Endothelial cell of umbilical vein (primary cell): ENCODE measurements at regions of chr12 and their contacts with region 1.

Region 1: DNA sequence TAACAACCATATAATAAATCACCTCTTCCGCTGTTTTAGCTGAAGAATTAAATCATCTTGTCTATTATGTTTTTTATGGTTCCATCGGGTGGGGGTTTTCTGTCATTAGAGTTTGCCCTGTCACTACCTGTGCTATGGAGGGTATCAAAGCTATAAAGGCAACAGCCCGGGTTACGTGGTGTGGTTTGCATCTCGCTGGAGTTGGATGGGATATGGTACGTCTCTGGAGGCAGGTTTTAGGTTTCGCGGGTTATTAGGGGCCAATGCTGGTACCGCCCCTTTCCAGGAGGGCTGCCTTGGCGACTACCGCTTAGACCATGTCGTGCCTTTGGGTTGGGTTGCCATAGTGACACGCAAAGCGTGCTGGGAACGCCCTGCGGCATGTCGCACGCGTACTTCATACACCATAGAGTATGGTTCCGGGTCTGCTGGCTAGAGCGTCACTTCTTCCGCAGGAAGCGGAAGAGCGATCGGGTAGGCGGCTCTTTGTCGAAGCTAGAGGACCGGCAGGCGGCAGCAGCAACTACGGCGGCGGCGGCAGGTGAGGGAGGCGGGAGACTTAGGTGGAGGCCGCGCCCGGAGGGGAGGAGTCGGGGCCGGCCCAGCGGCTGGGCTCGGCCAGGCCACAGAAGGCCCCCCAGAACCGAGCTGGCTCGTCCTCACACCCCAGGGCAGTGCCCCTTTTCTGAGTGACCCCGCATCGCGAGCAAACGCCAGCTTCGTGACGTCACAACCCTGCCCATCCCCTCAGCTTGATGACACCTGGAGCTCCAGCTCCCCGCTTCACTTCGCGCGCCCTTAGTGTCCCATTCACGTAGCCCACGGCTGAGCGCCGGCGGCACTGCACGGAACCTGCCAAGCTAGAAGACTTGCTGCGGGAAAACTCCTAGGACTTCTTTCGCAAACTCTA is at the start of gene ZC3H10:
- DNase-seq: peak; percentile 99
- H3K4me3 ChIP-seq: peak within 1 kb of the TSS; percentile 70 to 98 (median 72)
- H3K27ac ChIP-seq: peak within 1 kb of the TSS; percentile 86
- H3K4me1 ChIP-seq: peaks cover 24% of the 10 kb centered on the region
- H3K27me3 ChIP-seq: no peaks in the 10 kb centered on the region
- CTCF ChIP-seq: peak; percentile 42 to 62
- POLR2A ChIP-seq: peak; percentile 100
- total RNA-seq, gene ZC3H10: 8.7 and 10.1 TPM in 2 replicates

Region 2: DNA sequence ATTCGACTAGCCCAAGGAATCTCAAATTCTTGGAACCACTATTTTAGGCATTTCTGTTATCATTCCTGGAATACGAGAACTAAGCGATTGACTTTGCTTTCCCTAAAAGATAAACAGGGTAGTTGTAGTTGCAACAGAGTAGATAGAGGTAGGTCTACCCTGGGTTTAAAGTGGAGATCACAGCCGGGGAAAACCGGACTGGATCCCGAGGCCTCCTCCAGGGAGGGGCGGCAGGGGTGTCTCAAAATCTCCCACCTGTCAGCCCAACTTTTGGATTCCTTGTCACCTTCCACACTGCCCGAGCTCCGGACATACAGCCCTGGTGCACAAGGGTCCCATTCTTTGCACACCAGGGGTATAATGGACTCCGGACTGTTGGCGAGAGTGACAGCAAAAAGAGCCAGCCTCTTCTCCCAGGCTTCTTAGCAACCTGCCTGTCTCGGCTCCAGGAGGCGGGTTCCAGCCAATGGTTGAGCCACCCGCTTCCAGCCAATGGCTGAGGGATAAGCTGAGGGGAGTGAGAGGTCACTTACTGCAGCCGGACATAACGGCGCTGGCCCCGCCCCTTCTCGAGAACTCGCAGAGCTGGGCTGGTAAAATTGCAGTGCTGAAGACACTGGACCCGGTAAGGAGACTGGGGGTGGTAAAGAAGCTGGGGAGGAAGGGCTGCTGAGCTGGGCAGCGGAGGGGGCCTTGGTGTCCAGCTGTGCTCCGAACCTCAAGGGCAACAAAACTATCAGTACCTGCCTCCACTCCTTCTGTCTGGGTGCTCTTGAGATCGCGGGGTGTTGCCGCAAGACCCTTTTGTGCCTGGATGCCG is 121.1 kb before region 1 on chr12 and contains the start of gene SUOX:
- CTCF ChIA-PET with region 1: no interaction called
- POLR2A ChIA-PET with region 1: no interaction called
- dilution Hi-C with region 1: no loop called
- intact Hi-C with region 1: loop called (anchors 1 kb)
- DNase-seq: peak; percentile 98
- H3K4me3 ChIP-seq: peak within 1 kb of the TSS; percentile 17 to 73 (median 40)
- H3K27ac ChIP-seq: no peak within 1 kb of the TSS
- H3K4me1 ChIP-seq: peaks cover 10% of the 10 kb centered on the region
- H3K27me3 ChIP-seq: no peaks in the 10 kb centered on the region
- CTCF ChIP-seq: no peak
- POLR2A ChIP-seq: peak; percentile 85
- total RNA-seq, gene SUOX: 24.3 and 24.8 TPM in 2 replicates

Region 3: GRCh38 chr12:56007564-56008559 is 110.2 kb before region 1 on chr12:
- CTCF ChIA-PET with region 1: no interaction called
- POLR2A ChIA-PET with region 1: no interaction called
- dilution Hi-C with region 1: no loop called
- intact Hi-C with region 1: no loop called
- DNase-seq: peak; percentile 37
- H3K4me3 ChIP-seq: peak overlapping the region; percentile 53 to 74 (median 53)
- H3K27ac ChIP-seq: no peak overlapping the region
- H3K4me1 ChIP-seq: peaks cover 5% of the 10 kb centered on the region
- H3K27me3 ChIP-seq: no peaks in the 10 kb centered on the region
- CTCF ChIP-seq: no peak
- POLR2A ChIP-seq: no peak

Region 4: GRCh38 chr12:56084958-56085543 is 33.0 kb before region 1 on chr12:
- CTCF ChIA-PET with region 1: interaction called, 14 read pairs
- POLR2A ChIA-PET with region 1: no interaction called
- dilution Hi-C with region 1: no loop called
- intact Hi-C with region 1: no loop called
- DNase-seq: peak; percentile 20
- H3K4me3 ChIP-seq: no peak overlapping the region
- H3K27ac ChIP-seq: no peak overlapping the region
- H3K4me1 ChIP-seq: peaks cover 16% of the 10 kb centered on the region
- H3K27me3 ChIP-seq: peaks cover 4 to 8% of the 10 kb centered on the region in 2 experiments
- CTCF ChIP-seq: peak; percentile 40 to 58
- POLR2A ChIP-seq: no peak

Region 5: GRCh38 chr12:56127888-56128669 is 10.0 kb after region 1 on chr12 and contains the start of gene ESYT1:
- CTCF ChIA-PET with region 1: interaction called, 31 read pairs
- POLR2A ChIA-PET with region 1: interaction called, 20 read pairs
- dilution Hi-C with region 1: no loop called
- intact Hi-C with region 1: loop called (anchors 1 kb)
- DNase-seq: peak; percentile 100
- H3K4me3 ChIP-seq: peak within 1 kb of the TSS; percentile 63 to 75 (median 68)
- H3K27ac ChIP-seq: peak within 1 kb of the TSS; percentile 46
- H3K4me1 ChIP-seq: peaks cover 28% of the 10 kb centered on the region
- H3K27me3 ChIP-seq: no peaks in the 10 kb centered on the region
- CTCF ChIP-seq: no peak
- POLR2A ChIP-seq: peak; percentile 82
- total RNA-seq, gene ESYT1: 133 and 161 TPM in 2 replicates

Region 6: DNA sequence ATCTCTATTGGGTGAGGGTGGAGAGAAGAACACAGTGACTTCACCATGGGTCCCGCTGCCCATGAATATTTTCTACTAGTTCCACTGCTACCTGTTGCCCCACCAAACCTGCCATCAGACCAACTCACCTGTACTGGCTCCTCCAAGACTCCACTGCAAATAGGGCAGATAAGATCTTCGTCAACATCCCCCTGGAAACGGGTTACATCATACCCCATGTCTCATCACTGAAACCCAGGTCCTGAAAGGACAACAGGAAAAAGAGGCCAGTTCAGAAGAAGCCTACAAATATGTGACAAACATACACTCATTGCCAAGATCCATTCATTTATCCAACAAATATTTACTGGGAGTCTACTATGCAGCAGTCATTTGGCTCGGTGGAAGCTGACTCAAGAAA is 95.8 kb after region 1 on chr12:
- CTCF ChIA-PET with region 1: no interaction called
- POLR2A ChIA-PET with region 1: no interaction called
- dilution Hi-C with region 1: no loop called
- intact Hi-C with region 1: no loop called
- DNase-seq: no peak
- H3K4me3 ChIP-seq: no peak overlapping the region
- H3K27ac ChIP-seq: no peak overlapping the region
- H3K4me1 ChIP-seq: no peaks in the 10 kb centered on the region
- H3K27me3 ChIP-seq: no peaks in the 10 kb centered on the region
- CTCF ChIP-seq: no peak
- POLR2A ChIP-seq: no peak

Region 7: DNA sequence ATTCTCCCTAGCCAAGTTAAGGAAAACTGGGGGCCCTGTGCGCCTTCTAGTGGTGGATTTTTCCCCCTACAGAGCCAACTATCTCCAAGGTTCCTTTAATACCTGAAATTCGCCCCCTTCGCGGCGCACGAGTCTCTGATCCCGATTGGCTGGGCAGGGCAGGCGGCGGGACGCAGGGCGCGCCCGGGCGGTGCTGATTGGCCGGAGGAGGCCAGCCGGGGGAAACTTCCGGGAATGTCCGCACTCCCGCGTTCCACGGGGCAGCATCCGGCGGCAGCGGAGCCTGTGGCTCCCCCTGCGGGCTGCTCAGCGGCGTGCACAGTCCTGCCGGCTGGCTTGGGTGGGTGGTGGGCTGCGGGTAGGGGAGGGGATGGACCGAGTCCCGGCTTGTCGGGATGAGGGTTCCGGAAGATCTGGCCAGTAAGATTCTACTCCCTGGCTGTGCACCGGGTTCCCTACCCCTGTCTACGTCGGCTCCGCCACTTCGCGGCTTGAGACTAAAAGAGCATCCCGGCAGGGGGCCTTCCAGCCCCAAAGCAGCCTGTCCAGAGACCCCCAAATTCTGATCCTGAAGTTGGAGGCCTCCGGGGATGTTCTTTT is 106.2 kb after region 1 on chr12 and contains the start of gene NABP2:
- CTCF ChIA-PET with region 1: interaction called, 7 read pairs
- POLR2A ChIA-PET with region 1: interaction called, 8 read pairs
- dilution Hi-C with region 1: no loop called
- intact Hi-C with region 1: loop called (anchors 1 kb)
- DNase-seq: peak; percentile 99
- H3K4me3 ChIP-seq: peak within 1 kb of the TSS; percentile 11 to 49 (median 49)
- H3K27ac ChIP-seq: peak within 1 kb of the TSS; percentile 77
- H3K4me1 ChIP-seq: peaks cover 19% of the 10 kb centered on the region
- H3K27me3 ChIP-seq: no peaks in the 10 kb centered on the region
- CTCF ChIP-seq: peak; percentile 82 to 96
- POLR2A ChIP-seq: peak; percentile 7
- total RNA-seq, gene NABP2: 41.0 and 42.4 TPM in 2 replicates

Region 8: DNA sequence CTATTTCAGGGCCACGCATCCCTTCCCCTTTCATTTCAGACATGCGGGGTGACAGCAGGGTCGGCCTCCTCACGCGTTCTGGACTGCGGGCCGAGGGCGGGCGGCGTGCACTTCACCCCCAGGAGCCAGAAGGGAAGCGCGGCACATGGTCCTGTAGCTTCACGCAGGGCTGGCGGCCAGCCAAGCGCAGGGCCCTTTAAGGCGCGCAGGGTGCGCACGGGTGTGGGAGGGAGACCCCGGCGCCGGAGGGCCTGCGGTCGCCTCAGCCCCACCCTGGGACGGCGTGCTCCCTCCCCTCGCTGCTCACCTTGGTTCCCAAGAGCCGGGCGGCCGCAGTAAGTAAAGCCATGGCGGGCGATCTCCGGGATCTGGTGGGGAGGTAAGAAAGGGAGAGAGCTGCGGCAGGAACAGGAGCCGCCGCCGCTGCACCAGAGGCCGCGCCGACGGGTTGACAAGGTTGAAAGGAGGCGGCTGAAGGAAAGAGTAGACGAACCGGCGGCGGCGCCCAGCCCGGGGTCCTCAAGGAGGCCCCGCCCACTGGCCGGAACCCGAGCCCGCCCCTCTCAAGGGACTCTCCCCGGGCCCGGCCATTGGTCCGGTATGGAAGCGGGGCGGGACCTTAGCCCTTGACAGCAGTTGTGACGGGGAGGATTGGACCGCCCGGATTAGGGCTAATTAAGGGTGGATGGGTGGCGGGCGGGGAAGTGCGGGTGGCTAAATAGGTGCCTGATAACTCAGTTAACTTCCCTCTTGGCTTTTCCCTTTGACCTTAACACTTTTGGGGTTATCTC is 182.0 kb after region 1 on chr12 and contains the start of gene CS:
- CTCF ChIA-PET with region 1: no interaction called
- POLR2A ChIA-PET with region 1: no interaction called
- dilution Hi-C with region 1: no loop called
- intact Hi-C with region 1: loop called (anchors 1 kb)
- DNase-seq: peak; percentile 96
- H3K4me3 ChIP-seq: peak within 1 kb of the TSS; percentile 2 to 91 (median 88)
- H3K27ac ChIP-seq: peak within 1 kb of the TSS; percentile 77
- H3K4me1 ChIP-seq: peaks cover 26% of the 10 kb centered on the region
- H3K27me3 ChIP-seq: no peaks in the 10 kb centered on the region
- CTCF ChIP-seq: no peak
- POLR2A ChIP-seq: peak; percentile 1
- total RNA-seq, gene CS: 296 and 312 TPM in 2 replicates

Region 9: DNA sequence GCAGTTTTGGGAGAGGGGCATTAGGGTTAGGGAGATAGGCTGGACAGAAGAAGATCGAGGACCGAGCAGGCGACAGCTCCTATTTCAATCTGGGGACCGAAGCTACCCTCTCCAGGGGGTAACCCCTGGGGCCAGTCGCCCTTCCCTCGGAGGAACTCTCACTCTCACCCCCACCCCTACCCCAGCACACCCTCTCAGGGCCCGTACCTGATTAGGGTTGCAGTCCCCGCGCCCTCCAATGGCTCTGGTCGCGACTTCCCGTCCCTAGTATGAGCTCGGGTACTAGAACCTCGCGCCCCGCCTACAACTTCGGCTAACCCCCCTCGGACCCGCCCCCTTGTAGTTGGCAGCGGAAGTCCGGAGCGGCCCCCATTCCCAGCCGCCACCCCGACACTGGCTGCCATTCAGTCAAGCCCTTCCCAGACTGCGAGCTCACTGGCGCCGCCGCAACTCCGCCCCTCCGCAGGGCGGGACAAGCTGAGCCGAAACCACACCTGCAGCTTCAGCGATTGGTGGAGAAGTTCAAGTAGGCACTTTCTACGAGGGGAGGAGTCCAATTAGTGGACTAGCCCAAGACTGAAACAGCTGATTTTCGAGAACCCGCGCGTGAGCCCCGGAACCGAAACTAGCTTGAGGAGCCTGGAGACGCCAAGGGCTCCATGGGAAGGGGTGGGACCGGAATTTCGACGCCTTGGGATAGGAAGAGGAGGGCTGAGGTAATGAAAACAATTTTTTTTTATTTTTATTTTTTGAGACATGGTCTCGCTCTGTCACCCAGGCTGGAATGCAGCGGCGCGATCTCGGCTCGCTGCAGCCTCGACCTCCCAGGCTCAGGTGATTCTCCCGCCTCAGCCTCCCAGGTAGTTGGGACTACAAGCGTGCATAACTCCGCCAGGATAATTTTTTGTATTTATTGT is 242.1 kb after region 1 on chr12 and contains the start of gene STAT2:
- CTCF ChIA-PET with region 1: no interaction called
- POLR2A ChIA-PET with region 1: no interaction called
- dilution Hi-C with region 1: no loop called
- intact Hi-C with region 1: no loop called
- DNase-seq: peak; percentile 100
- H3K4me3 ChIP-seq: peak within 1 kb of the TSS; percentile 59 to 92 (median 74)
- H3K27ac ChIP-seq: peak within 1 kb of the TSS; percentile 73
- H3K4me1 ChIP-seq: peaks cover 14% of the 10 kb centered on the region
- H3K27me3 ChIP-seq: no peaks in the 10 kb centered on the region
- CTCF ChIP-seq: no peak
- POLR2A ChIP-seq: peak; percentile 80
- total RNA-seq, gene STAT2: 66.5 and 74.8 TPM in 2 replicates

Region 10: DNA sequence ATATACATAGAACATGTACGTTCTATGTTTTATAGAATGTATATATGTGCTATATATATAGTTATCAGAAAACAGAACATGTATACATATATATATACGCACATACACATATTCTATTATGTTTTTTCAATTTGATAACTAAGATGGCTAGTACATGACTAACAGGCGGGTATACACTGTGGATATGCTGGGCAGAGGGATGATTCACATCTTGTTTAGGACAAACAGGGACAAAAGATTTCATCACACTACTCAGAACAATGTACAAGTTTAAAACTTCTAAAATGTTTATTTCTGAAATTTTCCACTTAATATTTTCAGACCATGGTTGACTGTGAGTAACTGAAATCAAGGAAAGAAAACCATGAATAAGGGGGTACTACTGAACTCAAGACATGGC is 313.8 kb after region 1 on chr12:
- CTCF ChIA-PET with region 1: no interaction called
- POLR2A ChIA-PET with region 1: no interaction called
- dilution Hi-C with region 1: no loop called
- intact Hi-C with region 1: no loop called
- DNase-seq: no peak
- H3K4me3 ChIP-seq: no peak overlapping the region
- H3K27ac ChIP-seq: no peak overlapping the region
- H3K4me1 ChIP-seq: no peaks in the 10 kb centered on the region
- H3K27me3 ChIP-seq: no peaks in the 10 kb centered on the region
- CTCF ChIP-seq: no peak
- POLR2A ChIP-seq: no peak